Natural killer cell (primary cell): ENCODE measurements at regions of chr2 and their contacts with region 1.

Region 1: DNA sequence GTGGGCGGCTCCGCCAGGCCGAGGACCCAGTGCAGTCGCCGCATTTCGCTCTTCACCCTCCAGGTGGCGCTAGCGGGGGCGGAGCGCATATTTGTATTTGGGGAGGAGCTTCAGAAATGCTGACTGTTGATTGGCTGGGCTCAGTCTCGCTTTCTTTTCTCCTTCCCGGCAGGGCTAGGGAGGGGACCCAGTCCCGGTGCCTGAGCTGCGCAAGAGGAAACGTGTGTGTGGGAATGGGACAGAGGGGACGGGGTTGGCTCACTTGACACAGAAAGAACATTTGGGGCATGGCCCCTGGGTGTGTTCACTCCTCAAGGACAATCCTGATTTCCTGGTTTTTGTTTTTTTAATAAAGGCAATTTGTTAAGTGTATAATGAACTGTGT is 20.3 kb upstream of the DNMT3A start:
- DNase-seq: peak; percentile 95 to 96
- ATAC-seq: peak; percentile 88 to 95 (median 88)
- H3K4me3 ChIP-seq: peak overlapping the region; percentile 74
- H3K4me3 Mint-ChIP-seq: peak overlapping the region; percentile 94
- H3K27ac ChIP-seq: peak overlapping the region; percentile 93
- H3K27ac Mint-ChIP-seq: peak overlapping the region; percentile 94 to 96
- H3K4me1 ChIP-seq: peaks cover 21% of the 10 kb centered on the region
- H3K4me1 Mint-ChIP-seq: peaks cover 26 to 33% of the 10 kb centered on the region in 2 donors
- H3K27me3 ChIP-seq: no peaks in the 10 kb centered on the region
- H3K27me3 Mint-ChIP-seq: no peaks in the 10 kb centered on the region
- CTCF ChIP-seq: peak; percentile 90

Region 2: GRCh38 chr2:25342372-25343186 is 19.5 kb before region 1 on chr2:
- intact Hi-C with region 1: loop called (anchors 1 kb)
- DNase-seq: peak; percentile 82 to 90
- ATAC-seq: peak; percentile 93 to 98 (median 94)
- H3K4me3 ChIP-seq: peak overlapping the region; percentile 20
- H3K4me3 Mint-ChIP-seq: peak overlapping the region; percentile 91
- H3K27ac ChIP-seq: no peak overlapping the region
- H3K27ac Mint-ChIP-seq: peak overlapping the region in 1 of 2 donors; percentile 85
- H3K4me1 ChIP-seq: peaks cover 33% of the 10 kb centered on the region
- H3K4me1 Mint-ChIP-seq: peaks cover 8 to 19% of the 10 kb centered on the region in 2 donors
- H3K27me3 ChIP-seq: no peaks in the 10 kb centered on the region
- H3K27me3 Mint-ChIP-seq: no peaks in the 10 kb centered on the region
- CTCF ChIP-seq: peak; percentile 95

Region 3: DNA sequence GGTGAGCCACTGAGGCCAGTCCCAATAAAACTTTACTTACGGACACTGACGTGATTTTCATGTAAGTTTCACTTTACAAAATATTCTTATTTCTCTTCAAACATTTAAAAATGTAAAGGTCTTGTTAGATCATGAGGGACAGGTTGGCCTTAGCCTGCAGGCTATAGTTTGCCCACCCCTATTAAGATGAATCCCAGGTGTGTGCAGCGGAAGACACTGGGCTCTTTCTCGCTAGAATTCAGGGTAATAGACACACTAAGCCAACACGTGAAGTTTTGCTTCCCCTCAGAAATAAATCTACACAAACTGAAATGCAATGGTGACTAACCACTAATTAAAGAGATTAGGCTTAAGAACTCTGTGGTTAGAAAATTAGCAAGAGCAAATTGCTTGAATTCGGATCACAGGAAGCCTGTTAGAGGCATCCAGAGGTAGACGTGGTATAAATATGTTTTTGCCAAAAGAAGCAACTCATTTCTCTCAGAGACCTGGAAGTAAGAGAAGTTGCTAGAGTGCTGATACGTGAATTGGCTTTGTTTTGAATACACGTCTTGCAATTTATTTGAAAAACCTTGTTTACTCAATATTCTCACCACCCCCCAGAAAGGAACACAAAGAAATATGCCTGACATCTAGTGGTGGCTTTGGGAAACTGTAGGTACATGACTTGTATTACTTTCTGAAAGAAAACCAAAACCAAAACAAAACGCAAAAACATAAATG is 159.8 kb after region 1 on chr2:
- intact Hi-C with region 1: loop called (anchors 1 kb)
- DNase-seq: peak in 1 of 2 donors; percentile 86
- ATAC-seq: peak; percentile 96 to 100 (median 100)
- H3K4me3 ChIP-seq: no peak overlapping the region
- H3K4me3 Mint-ChIP-seq: peak overlapping the region; percentile 25
- H3K27ac ChIP-seq: peak overlapping the region; percentile 53
- H3K27ac Mint-ChIP-seq: peak overlapping the region; percentile 62 to 71
- H3K4me1 ChIP-seq: peaks cover 5% of the 10 kb centered on the region
- H3K4me1 Mint-ChIP-seq: peaks cover 8 to 9% of the 10 kb centered on the region in 2 donors
- H3K27me3 ChIP-seq: no peaks in the 10 kb centered on the region
- H3K27me3 Mint-ChIP-seq: no peaks in the 10 kb centered on the region
- CTCF ChIP-seq: peak; percentile 77

Region 4: GRCh38 chr2:25558262-25558661 is 196.2 kb after region 1 on chr2:
- intact Hi-C with region 1: loop called (anchors 5 kb)
- DNase-seq: peak in 1 of 2 donors; percentile 46
- ATAC-seq: peak; percentile 84 to 93 (median 87)
- H3K4me3 ChIP-seq: no peak overlapping the region
- H3K4me3 Mint-ChIP-seq: peak overlapping the region; percentile 57
- H3K27ac ChIP-seq: peak overlapping the region; percentile 65
- H3K27ac Mint-ChIP-seq: peak overlapping the region; percentile 90 to 93
- H3K4me1 ChIP-seq: peaks cover 18% of the 10 kb centered on the region
- H3K4me1 Mint-ChIP-seq: peaks cover 52 to 53% of the 10 kb centered on the region in 2 donors
- H3K27me3 ChIP-seq: no peaks in the 10 kb centered on the region
- H3K27me3 Mint-ChIP-seq: no peaks in the 10 kb centered on the region
- CTCF ChIP-seq: no peak

Region 5: GRCh38 chr2:25673300-25674076 is 311.4 kb after region 1 on chr2 and contains the start of gene DTNB:
- intact Hi-C with region 1: loop called (anchors 10 kb)
- DNase-seq: peak; percentile 77 to 91
- ATAC-seq: peak; percentile 79 to 92 (median 80)
- H3K4me3 ChIP-seq: peak within 1 kb of the TSS; percentile 64
- H3K4me3 Mint-ChIP-seq: peak within 1 kb of the TSS; percentile 88
- H3K27ac ChIP-seq: peak within 1 kb of the TSS; percentile 49
- H3K27ac Mint-ChIP-seq: peak within 1 kb of the TSS; percentile 47 to 77
- H3K4me1 ChIP-seq: peaks cover 17% of the 10 kb centered on the region
- H3K4me1 Mint-ChIP-seq: peaks cover 14 to 19% of the 10 kb centered on the region in 2 donors
- H3K27me3 ChIP-seq: no peaks in the 10 kb centered on the region
- H3K27me3 Mint-ChIP-seq: no peaks in the 10 kb centered on the region
- CTCF ChIP-seq: no peak
- total RNA-seq, gene DTNB: 20.8 to 33.7 (median 23.6) TPM